Mammary epithelial cell (primary cell): ENCODE measurements at regions of chr4 and their contacts with region 1.

Region 1: GRCh38 chr4:177250056-177250696 is 59.5 kb upstream of the NEIL3 start:
- DNase-seq: peak; percentile 58
- H3K4me3 ChIP-seq: no peak overlapping the region
- H3K27ac ChIP-seq: no peak overlapping the region
- H3K4me1 ChIP-seq: no peaks in the 10 kb centered on the region
- H3K27me3 ChIP-seq: peaks cover 2% of the 10 kb centered on the region
- CTCF ChIP-seq: peak; percentile 99 to 100

Region 2: GRCh38 chr4:177163532-177163931 is 86.6 kb before region 1 on chr4:
- CTCF ChIA-PET with region 1: no interaction called
- dilution Hi-C with region 1: no loop called
- in situ Hi-C with region 1: no loop called
- intact Hi-C with region 1: no loop called
- DNase-seq: peak; percentile 6
- H3K4me3 ChIP-seq: no peak overlapping the region
- H3K27ac ChIP-seq: no peak overlapping the region
- H3K4me1 ChIP-seq: no peaks in the 10 kb centered on the region
- H3K27me3 ChIP-seq: no peaks in the 10 kb centered on the region
- CTCF ChIP-seq: no peak

Region 3: GRCh38 chr4:177229331-177229730 is 20.8 kb before region 1 on chr4:
- CTCF ChIA-PET with region 1: no interaction called
- dilution Hi-C with region 1: no loop called
- in situ Hi-C with region 1: no loop called
- intact Hi-C with region 1: no loop called
- DNase-seq: no peak
- H3K4me3 ChIP-seq: peak overlapping the region in 2 of 3 experiments; percentile 3 to 31
- H3K27ac ChIP-seq: no peak overlapping the region
- H3K4me1 ChIP-seq: no peaks in the 10 kb centered on the region
- H3K27me3 ChIP-seq: no peaks in the 10 kb centered on the region
- CTCF ChIP-seq: no peak

Region 4: GRCh38 chr4:177322266-177322665 is 72.1 kb after region 1 on chr4:
- CTCF ChIA-PET with region 1: no interaction called
- dilution Hi-C with region 1: no loop called
- in situ Hi-C with region 1: no loop called
- intact Hi-C with region 1: no loop called
- DNase-seq: no peak
- H3K4me3 ChIP-seq: no peak overlapping the region
- H3K27ac ChIP-seq: no peak overlapping the region
- H3K4me1 ChIP-seq: no peaks in the 10 kb centered on the region
- H3K27me3 ChIP-seq: no peaks in the 10 kb centered on the region
- CTCF ChIP-seq: no peak

Region 5: GRCh38 chr4:177339477-177340374 is 89.5 kb after region 1 on chr4:
- CTCF ChIA-PET with region 1: interaction called, 10 read pairs
- dilution Hi-C with region 1: no loop called
- in situ Hi-C with region 1: loop called (anchors 10 kb)
- intact Hi-C with region 1: loop called (anchors 1 kb)
- DNase-seq: peak; percentile 35
- H3K4me3 ChIP-seq: no peak overlapping the region
- H3K27ac ChIP-seq: no peak overlapping the region
- H3K4me1 ChIP-seq: no peaks in the 10 kb centered on the region
- H3K27me3 ChIP-seq: no peaks in the 10 kb centered on the region
- CTCF ChIP-seq: peak; percentile 70 to 77

Region 6: GRCh38 chr4:177546745-177547144 is 296.6 kb after region 1 on chr4:
- CTCF ChIA-PET with region 1: no interaction called
- dilution Hi-C with region 1: no loop called
- in situ Hi-C with region 1: loop called in 1 of 2 experiments (anchors 25 kb)
- intact Hi-C with region 1: loop called (anchors 1 kb)
- DNase-seq: peak; percentile 24
- H3K4me3 ChIP-seq: no peak overlapping the region
- H3K27ac ChIP-seq: no peak overlapping the region
- H3K4me1 ChIP-seq: no peaks in the 10 kb centered on the region
- H3K27me3 ChIP-seq: no peaks in the 10 kb centered on the region
- CTCF ChIP-seq: peak; percentile 17 to 53

Region 7: GRCh38 chr4:177555007-177555574 is 304.9 kb after region 1 on chr4:
- CTCF ChIA-PET with region 1: no interaction called
- dilution Hi-C with region 1: no loop called
- in situ Hi-C with region 1: loop called in 1 of 2 experiments (anchors 25 kb)
- intact Hi-C with region 1: loop called (anchors 2 kb)
- DNase-seq: peak; percentile 16
- H3K4me3 ChIP-seq: no peak overlapping the region
- H3K27ac ChIP-seq: no peak overlapping the region
- H3K4me1 ChIP-seq: no peaks in the 10 kb centered on the region
- H3K27me3 ChIP-seq: no peaks in the 10 kb centered on the region
- CTCF ChIP-seq: peak; percentile 63 to 69